Naive thymus-derived CD4-positive, alpha-beta T cell (primary cell): ENCODE measurements at regions of chr17 and their contacts with region 1.

Region 1: DNA sequence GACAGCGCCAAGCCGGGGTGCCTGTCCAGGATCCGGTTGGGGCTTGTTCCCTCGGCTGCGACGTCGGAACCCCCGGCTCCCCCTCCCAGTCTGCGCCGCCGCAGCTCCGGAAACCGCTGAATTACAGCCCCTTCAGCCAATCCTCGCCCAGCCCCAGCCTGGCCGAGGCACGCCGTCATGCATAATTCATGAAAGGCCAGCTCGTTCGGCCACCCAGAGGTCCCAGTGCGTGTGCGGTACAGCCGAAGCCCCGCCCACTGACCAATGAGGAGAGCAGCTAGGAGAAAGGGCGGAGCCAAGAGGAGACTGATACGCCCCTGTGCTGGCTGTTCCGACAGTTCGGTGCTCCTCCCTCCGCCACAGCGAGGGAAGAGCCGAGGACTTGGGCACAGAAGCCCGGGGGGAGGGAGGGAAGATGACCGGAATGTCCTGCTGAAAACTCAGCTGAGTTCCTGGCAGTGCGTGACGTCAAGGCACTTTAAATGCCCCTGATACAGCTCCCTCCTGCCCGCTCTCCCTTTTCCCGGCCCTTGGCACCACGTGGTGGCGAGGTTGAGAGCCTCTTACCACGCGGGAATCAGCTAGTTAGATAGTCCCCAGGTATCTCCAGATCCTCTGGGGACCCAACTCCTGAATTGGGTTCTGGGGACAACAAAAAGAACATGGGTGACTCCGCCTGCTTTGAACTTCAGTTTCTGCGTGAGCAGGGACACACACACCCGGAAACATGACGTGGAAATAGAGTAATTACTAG is at the start of gene STAT3:
- DNase-seq: peak; percentile 100
- ATAC-seq: peak; percentile 93
- H3K4me3 ChIP-seq: peak within 1 kb of the TSS; percentile 65
- H3K4me3 Mint-ChIP-seq: peak within 1 kb of the TSS; percentile 87 to 99 (median 96)
- H3K27ac ChIP-seq: peak within 1 kb of the TSS; percentile 94
- H3K27ac Mint-ChIP-seq: peak within 1 kb of the TSS; percentile 99 to 100 (median 100)
- H3K4me1 ChIP-seq: peaks cover 13 to 20% of the 10 kb centered on the region in 2 donors
- H3K4me1 Mint-ChIP-seq: peaks cover 35 to 59% (median 48%) of the 10 kb centered on the region in 7 donors
- H3K27me3 ChIP-seq: no peaks in the 10 kb centered on the region
- H3K27me3 Mint-ChIP-seq: peaks cover 0 to 3% (median 0%) of the 10 kb centered on the region in 5 donors
- total RNA-seq, gene STAT3: 133 to 275 (median 231) TPM

Region 2: GRCh38 chr17:42019509-42020404 is 368.8 kb before region 1 on chr17 and contains the start of gene NKIRAS2:
- CTCF ChIA-PET with region 1: no interaction called
- POLR2A ChIA-PET with region 1: interaction called, 7 read pairs
- intact Hi-C with region 1: loop called (anchors 2 kb)
- DNase-seq: peak; percentile 83 to 97 (median 89)
- ATAC-seq: peak; percentile 88
- H3K4me3 ChIP-seq: peak within 1 kb of the TSS; percentile 85
- H3K4me3 Mint-ChIP-seq: peak within 1 kb of the TSS; percentile 91 to 100 (median 99)
- H3K27ac ChIP-seq: peak within 1 kb of the TSS; percentile 84
- H3K27ac Mint-ChIP-seq: peak within 1 kb of the TSS; percentile 77 to 99 (median 90)
- H3K4me1 ChIP-seq: peaks cover 32 to 37% of the 10 kb centered on the region in 2 donors
- H3K4me1 Mint-ChIP-seq: peaks cover 44 to 69% (median 56%) of the 10 kb centered on the region in 7 donors
- H3K27me3 ChIP-seq: no peaks in the 10 kb centered on the region
- H3K27me3 Mint-ChIP-seq: no peaks in the 10 kb centered on the region
- total RNA-seq, gene NKIRAS2: 14.3 to 24.0 (median 20.4) TPM

Region 3: GRCh38 chr17:42248351-42249179 is 140.0 kb before region 1 on chr17:
- CTCF ChIA-PET with region 1: no interaction called
- POLR2A ChIA-PET with region 1: interaction called, 32 read pairs
- intact Hi-C with region 1: loop called in 1 of 2 experiments (anchors 2 kb)
- DNase-seq: peak; percentile 47 to 95 (median 90)
- ATAC-seq: peak; percentile 93
- H3K4me3 ChIP-seq: peak overlapping the region; percentile 66
- H3K4me3 Mint-ChIP-seq: peak overlapping the region; percentile 83 to 99 (median 90)
- H3K27ac ChIP-seq: peak overlapping the region; percentile 97
- H3K27ac Mint-ChIP-seq: peak overlapping the region; percentile 97 to 99 (median 99)
- H3K4me1 ChIP-seq: peaks cover 43 to 52% of the 10 kb centered on the region in 2 donors
- H3K4me1 Mint-ChIP-seq: peaks cover 50 to 83% (median 74%) of the 10 kb centered on the region in 7 donors
- H3K27me3 ChIP-seq: no peaks in the 10 kb centered on the region
- H3K27me3 Mint-ChIP-seq: no peaks in the 10 kb centered on the region

Region 4: GRCh38 chr17:42312285-42313130 is 76.0 kb before region 1 on chr17:
- CTCF ChIA-PET with region 1: interaction called, 9 read pairs
- POLR2A ChIA-PET with region 1: interaction called, 31 read pairs
- intact Hi-C with region 1: no loop called
- DNase-seq: peak; percentile 62 to 81 (median 74)
- ATAC-seq: peak; percentile 82
- H3K4me3 ChIP-seq: peak overlapping the region; percentile 24
- H3K4me3 Mint-ChIP-seq: peak overlapping the region; percentile 54 to 82 (median 72)
- H3K27ac ChIP-seq: peak overlapping the region; percentile 69
- H3K27ac Mint-ChIP-seq: peak overlapping the region; percentile 62 to 94 (median 85)
- H3K4me1 ChIP-seq: peaks cover 13 to 67% of the 10 kb centered on the region in 2 donors
- H3K4me1 Mint-ChIP-seq: peaks cover 49 to 94% (median 79%) of the 10 kb centered on the region in 7 donors
- H3K27me3 ChIP-seq: no peaks in the 10 kb centered on the region
- H3K27me3 Mint-ChIP-seq: no peaks in the 10 kb centered on the region

Region 5: DNA sequence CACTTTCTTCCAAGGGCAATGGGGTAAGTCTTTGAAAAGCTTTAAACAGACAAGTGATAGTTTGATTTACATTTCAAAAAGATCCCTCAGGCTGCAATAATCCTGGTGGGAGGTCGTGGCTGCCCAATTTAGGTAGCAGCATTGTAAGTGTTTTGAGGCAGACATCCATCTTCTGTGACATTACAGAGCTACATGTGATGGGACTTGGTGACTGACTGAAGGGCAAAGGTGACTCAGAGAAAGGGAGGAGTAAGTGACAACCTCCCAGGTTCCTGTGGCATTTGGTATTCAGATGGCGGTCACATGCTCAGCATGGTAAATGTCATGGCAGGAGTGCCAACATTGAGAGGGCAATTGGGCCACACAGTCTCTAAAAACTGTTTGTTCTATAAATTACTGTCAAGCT is 26.8 kb before region 1 on chr17:
- CTCF ChIA-PET with region 1: interaction called, 3 read pairs
- POLR2A ChIA-PET with region 1: interaction called, 8 read pairs
- intact Hi-C with region 1: loop called in 1 of 2 experiments (anchors 2 kb)
- DNase-seq: peak in 1 of 9 donors; percentile 32
- ATAC-seq: peak; percentile 71
- H3K4me3 ChIP-seq: no peak overlapping the region
- H3K4me3 Mint-ChIP-seq: peak overlapping the region in 4 of 10 donors; percentile 3 to 45 (median 23)
- H3K27ac ChIP-seq: no peak overlapping the region
- H3K27ac Mint-ChIP-seq: peak overlapping the region in 8 of 9 donors; percentile 12 to 80 (median 46)
- H3K4me1 ChIP-seq: peaks cover 34 to 38% of the 10 kb centered on the region in 2 donors
- H3K4me1 Mint-ChIP-seq: peaks cover 47 to 83% (median 72%) of the 10 kb centered on the region in 7 donors
- H3K27me3 ChIP-seq: no peaks in the 10 kb centered on the region
- H3K27me3 Mint-ChIP-seq: no peaks in the 10 kb centered on the region

Region 6: DNA sequence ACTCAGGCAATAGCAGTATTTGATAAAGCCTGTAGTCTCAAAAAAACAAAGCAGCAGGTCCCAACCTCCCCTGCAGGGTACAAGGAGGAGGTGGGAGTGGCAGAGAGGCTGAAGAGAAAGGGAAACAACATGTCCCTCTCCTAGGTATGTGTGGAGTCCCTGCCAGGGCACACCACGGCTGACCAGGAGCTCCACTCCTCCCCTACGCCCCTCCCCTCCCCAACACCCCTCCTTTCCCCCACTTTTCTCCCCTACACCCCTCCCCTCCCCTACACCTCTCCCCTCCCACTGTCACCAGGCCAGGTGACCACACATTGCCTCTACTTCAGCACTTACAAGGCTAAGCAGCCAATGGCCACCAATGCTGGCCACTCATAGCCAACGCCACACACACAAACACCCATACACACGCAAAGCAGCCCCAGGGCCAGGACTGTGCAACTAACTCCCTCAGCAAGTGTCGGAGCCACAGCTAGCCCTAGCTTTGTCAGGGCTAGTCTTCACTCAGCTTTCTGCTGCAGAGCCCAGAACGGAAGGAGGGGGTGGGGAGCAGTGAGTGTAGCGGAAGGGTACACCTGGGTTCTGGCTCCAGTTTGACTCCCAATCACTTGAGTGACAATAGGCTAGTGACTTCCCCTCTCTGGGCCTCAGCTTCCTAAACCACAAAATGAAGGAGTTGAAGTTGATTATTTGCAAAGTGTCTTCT is 26.3 kb after region 1 on chr17:
- CTCF ChIA-PET with region 1: interaction called, 3 read pairs
- POLR2A ChIA-PET with region 1: interaction called, 14 read pairs
- intact Hi-C with region 1: no loop called
- DNase-seq: peak in 8 of 9 donors; percentile 40 to 66 (median 61)
- ATAC-seq: peak; percentile 78
- H3K4me3 ChIP-seq: peak overlapping the region; percentile 48
- H3K4me3 Mint-ChIP-seq: peak overlapping the region; percentile 76 to 91 (median 82)
- H3K27ac ChIP-seq: peak overlapping the region; percentile 42
- H3K27ac Mint-ChIP-seq: peak overlapping the region in 8 of 9 donors; percentile 68 to 92 (median 84)
- H3K4me1 ChIP-seq: peaks cover 3 to 16% of the 10 kb centered on the region in 2 donors
- H3K4me1 Mint-ChIP-seq: peaks cover 16 to 28% (median 21%) of the 10 kb centered on the region in 7 donors
- H3K27me3 ChIP-seq: no peaks in the 10 kb centered on the region
- H3K27me3 Mint-ChIP-seq: peaks cover 0 to 6% (median 0%) of the 10 kb centered on the region in 5 donors

Region 7: DNA sequence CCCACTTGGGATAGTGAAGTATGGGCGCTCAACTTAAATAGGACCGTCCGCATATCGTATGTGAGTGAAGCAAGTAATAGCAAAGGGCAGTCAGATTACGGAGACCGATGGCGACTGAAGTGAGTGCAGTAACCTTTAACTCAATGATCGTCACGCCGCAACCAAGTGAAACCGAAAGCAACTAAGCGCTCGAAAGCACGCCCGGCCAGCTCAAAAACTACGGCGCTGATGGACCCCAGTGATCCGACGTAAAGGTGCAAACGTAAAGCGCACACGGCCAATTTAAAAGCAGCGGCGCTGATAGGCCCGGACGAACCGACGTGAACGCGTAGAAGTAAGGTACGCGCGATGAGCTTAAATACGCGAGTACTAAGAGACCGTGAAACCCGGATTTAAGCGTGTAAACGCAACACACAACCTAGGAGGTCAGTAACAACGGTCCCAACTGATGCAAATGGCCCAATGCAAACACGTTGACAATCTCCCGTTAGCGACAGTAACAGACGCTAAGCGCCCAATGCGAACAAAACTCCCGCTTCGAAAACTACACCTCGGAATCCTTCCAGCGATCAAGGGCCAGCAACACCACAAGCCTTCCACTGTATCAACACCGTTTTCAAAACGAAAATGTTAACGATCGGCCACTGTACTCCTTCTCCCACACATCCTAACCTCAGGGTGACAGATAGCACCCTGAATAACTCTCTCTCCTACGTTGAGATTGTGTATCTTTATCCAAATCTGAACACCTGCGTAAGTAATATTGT is 972.4 kb after region 1 on chr17:
- CTCF ChIA-PET with region 1: no interaction called
- POLR2A ChIA-PET with region 1: interaction called, 5 read pairs
- intact Hi-C with region 1: loop called in 1 of 2 experiments (anchors 10 kb)
- DNase-seq: peak; percentile 69 to 97 (median 91)
- ATAC-seq: peak; percentile 88
- H3K4me3 ChIP-seq: peak overlapping the region; percentile 71
- H3K4me3 Mint-ChIP-seq: peak overlapping the region; percentile 87 to 99 (median 96)
- H3K27ac ChIP-seq: peak overlapping the region; percentile 95
- H3K27ac Mint-ChIP-seq: peak overlapping the region; percentile 98 to 100 (median 100)
- H3K4me1 ChIP-seq: peaks cover 13 to 14% of the 10 kb centered on the region in 2 donors
- H3K4me1 Mint-ChIP-seq: peaks cover 9 to 56% (median 38%) of the 10 kb centered on the region in 7 donors
- H3K27me3 ChIP-seq: no peaks in the 10 kb centered on the region
- H3K27me3 Mint-ChIP-seq: peaks cover 0 to 9% (median 0%) of the 10 kb centered on the region in 5 donors